Activated CD4-positive, alpha-beta T cell treated with anti-CD3 and anti-CD28 coated beads for 36 hours (primary cell): ENCODE measurements at regions of chr3 and their contacts with region 1.

Region 1: GRCh38 chr3:85821130-85821756 is 862.5 kb downstream of the CADM2 start:
- DNase-seq: peak; percentile 16
- ATAC-seq: no peak
- H3K4me3 Mint-ChIP-seq: no peak overlapping the region
- H3K27ac Mint-ChIP-seq: no peak overlapping the region
- H3K4me1 Mint-ChIP-seq: no peaks in the 10 kb centered on the region
- H3K27me3 Mint-ChIP-seq: no peaks in the 10 kb centered on the region

Region 2: GRCh38 chr3:86109434-86109833 is 288.2 kb after region 1 on chr3:
- CTCF ChIA-PET with region 1: no interaction called
- POLR2A ChIA-PET with region 1: no interaction called
- intact Hi-C with region 1: no loop called
- DNase-seq: no peak
- ATAC-seq: no peak
- H3K4me3 Mint-ChIP-seq: no peak overlapping the region
- H3K27ac Mint-ChIP-seq: no peak overlapping the region
- H3K4me1 Mint-ChIP-seq: no peaks in the 10 kb centered on the region
- H3K27me3 Mint-ChIP-seq: no peaks in the 10 kb centered on the region

Region 3: GRCh38 chr3:86225461-86225860 is 404.2 kb after region 1 on chr3:
- CTCF ChIA-PET with region 1: no interaction called
- POLR2A ChIA-PET with region 1: no interaction called
- intact Hi-C with region 1: no loop called
- DNase-seq: no peak
- ATAC-seq: no peak
- H3K4me3 Mint-ChIP-seq: no peak overlapping the region
- H3K27ac Mint-ChIP-seq: no peak overlapping the region
- H3K4me1 Mint-ChIP-seq: no peaks in the 10 kb centered on the region
- H3K27me3 Mint-ChIP-seq: no peaks in the 10 kb centered on the region

Region 4: DNA sequence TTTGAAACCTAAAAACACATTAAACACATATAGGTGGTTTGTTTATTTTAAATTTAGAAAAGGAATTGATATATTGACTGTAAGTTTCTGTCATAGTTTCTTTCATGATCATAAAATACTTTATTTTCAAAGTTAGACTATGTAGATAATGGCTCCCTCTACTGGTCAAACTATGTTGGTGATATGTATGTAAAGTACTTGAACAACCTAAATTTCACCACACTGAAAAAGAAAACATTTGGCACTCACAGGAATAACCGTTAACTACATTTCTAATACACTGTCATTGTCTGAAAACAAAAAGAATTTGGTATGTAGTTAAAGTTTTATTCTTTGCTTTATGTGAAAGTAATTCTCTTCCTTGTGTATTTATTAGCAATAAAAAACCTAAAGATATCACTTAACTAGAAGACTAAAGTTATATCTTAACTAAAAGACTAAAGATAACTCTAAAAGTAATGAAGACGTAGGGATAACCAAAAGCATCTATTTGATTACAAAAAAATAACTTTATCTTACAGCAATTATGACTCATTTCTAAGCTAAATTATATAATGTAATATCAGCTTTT is 742.2 kb after region 1 on chr3:
- CTCF ChIA-PET with region 1: no interaction called
- POLR2A ChIA-PET with region 1: no interaction called
- intact Hi-C with region 1: loop called in 1 of 2 experiments (anchors 2 kb)
- DNase-seq: no peak
- ATAC-seq: no peak
- H3K4me3 Mint-ChIP-seq: no peak overlapping the region
- H3K27ac Mint-ChIP-seq: no peak overlapping the region
- H3K4me1 Mint-ChIP-seq: no peaks in the 10 kb centered on the region
- H3K27me3 Mint-ChIP-seq: no peaks in the 10 kb centered on the region